CD4-positive, alpha-beta memory T cell (primary cell): ENCODE measurements at regions of chr9 and their contacts with region 1.

Region 1: GRCh38 chr9:21709464-21710058 is 92.9 kb upstream of the MTAP start:
- DNase-seq: peak; percentile 44 to 57 (median 50)
- H3K4me3 ChIP-seq: no peak overlapping the region
- H3K4me3 Mint-ChIP-seq: no peak overlapping the region
- H3K27ac ChIP-seq: no peak overlapping the region
- H3K27ac Mint-ChIP-seq: peak overlapping the region in 1 of 7 donors; percentile 43
- H3K4me1 ChIP-seq: no peaks in the 10 kb centered on the region
- H3K4me1 Mint-ChIP-seq: peaks cover 0 to 8% (median 5%) of the 10 kb centered on the region in 4 donors
- H3K27me3 ChIP-seq: peaks cover 4% of the 10 kb centered on the region
- H3K27me3 Mint-ChIP-seq: peaks cover 1 to 3% of the 10 kb centered on the region in 2 donors

Region 2: DNA sequence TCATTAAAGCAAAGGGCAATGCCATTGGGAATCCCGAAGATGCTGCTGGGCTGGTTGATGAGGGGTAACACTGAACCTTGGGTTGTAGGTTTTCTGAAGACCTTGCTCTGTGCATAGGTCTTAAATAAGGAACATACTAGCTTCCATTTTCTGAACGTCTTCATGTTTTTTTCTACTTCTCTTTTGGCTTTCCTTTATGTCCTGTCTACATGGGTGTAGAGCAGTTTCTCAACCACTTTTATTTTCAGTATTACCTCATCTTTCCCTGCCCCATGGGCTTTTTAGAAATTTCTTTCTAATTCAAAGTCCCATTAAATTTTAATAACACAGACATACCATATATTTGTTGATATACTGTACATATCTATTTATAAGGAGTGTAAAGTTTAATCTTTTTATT is 469.6 kb before region 1 on chr9 and contains the start of gene IFNA14:
- CTCF ChIA-PET with region 1: interaction called, 4 read pairs
- POLR2A ChIA-PET with region 1: no interaction called
- intact Hi-C with region 1: loop called (anchors 10 kb)
- DNase-seq: no peak
- H3K4me3 ChIP-seq: no peak within 1 kb of the TSS
- H3K4me3 Mint-ChIP-seq: no peak within 1 kb of the TSS
- H3K27ac ChIP-seq: no peak within 1 kb of the TSS
- H3K27ac Mint-ChIP-seq: no peak within 1 kb of the TSS
- H3K4me1 ChIP-seq: peaks cover 5% of the 10 kb centered on the region
- H3K4me1 Mint-ChIP-seq: peaks cover 4 to 12% (median 7%) of the 10 kb centered on the region in 4 donors
- H3K27me3 ChIP-seq: no peaks in the 10 kb centered on the region
- H3K27me3 Mint-ChIP-seq: peaks cover 2 to 15% of the 10 kb centered on the region in 2 donors
- total RNA-seq, gene IFNA14: not detected

Region 3: GRCh38 chr9:21434202-21435014 is 275.2 kb before region 1 on chr9:
- CTCF ChIA-PET with region 1: interaction called, 10 read pairs
- POLR2A ChIA-PET with region 1: no interaction called
- intact Hi-C with region 1: no loop called
- DNase-seq: peak; percentile 31 to 55 (median 40)
- H3K4me3 ChIP-seq: no peak overlapping the region
- H3K4me3 Mint-ChIP-seq: no peak overlapping the region
- H3K27ac ChIP-seq: no peak overlapping the region
- H3K27ac Mint-ChIP-seq: no peak overlapping the region
- H3K4me1 ChIP-seq: no peaks in the 10 kb centered on the region
- H3K4me1 Mint-ChIP-seq: no peaks in the 10 kb centered on the region
- H3K27me3 ChIP-seq: no peaks in the 10 kb centered on the region
- H3K27me3 Mint-ChIP-seq: peaks cover 14 to 19% of the 10 kb centered on the region in 2 donors

Region 4: DNA sequence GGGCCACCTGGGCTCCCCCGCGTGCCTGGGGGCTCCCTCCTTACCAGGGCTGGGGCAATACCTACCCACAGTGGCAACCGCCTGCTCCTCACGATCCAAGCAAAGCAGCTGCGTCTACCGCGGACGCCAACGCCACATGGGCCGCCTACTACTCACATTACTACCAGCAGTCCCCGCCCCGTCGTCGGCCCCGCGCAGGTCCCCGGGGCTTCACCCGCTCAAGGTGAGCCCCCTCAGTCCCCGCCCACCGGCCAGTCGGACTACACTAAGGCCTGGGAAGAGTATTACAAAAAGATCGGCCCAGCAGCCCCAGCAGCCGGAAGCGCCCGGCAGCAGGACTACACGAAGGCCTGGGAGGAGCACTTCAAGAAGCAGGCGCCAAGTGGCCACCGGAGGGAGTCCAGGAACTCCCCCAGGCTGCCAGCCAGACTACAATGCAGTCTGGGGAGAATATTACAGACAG is 13.1 kb before region 1 on chr9:
- CTCF ChIA-PET with region 1: interaction called, 12 read pairs
- POLR2A ChIA-PET with region 1: no interaction called
- intact Hi-C with region 1: no loop called
- DNase-seq: no peak
- H3K4me3 ChIP-seq: no peak overlapping the region
- H3K4me3 Mint-ChIP-seq: no peak overlapping the region
- H3K27ac ChIP-seq: no peak overlapping the region
- H3K27ac Mint-ChIP-seq: no peak overlapping the region
- H3K4me1 ChIP-seq: no peaks in the 10 kb centered on the region
- H3K4me1 Mint-ChIP-seq: no peaks in the 10 kb centered on the region
- H3K27me3 ChIP-seq: no peaks in the 10 kb centered on the region
- H3K27me3 Mint-ChIP-seq: peaks cover 5 to 8% of the 10 kb centered on the region in 2 donors

Region 5: GRCh38 chr9:21770877-21771560 is 61.5 kb after region 1 on chr9:
- CTCF ChIA-PET with region 1: interaction called, 12 read pairs
- POLR2A ChIA-PET with region 1: no interaction called
- intact Hi-C with region 1: no loop called
- DNase-seq: no peak
- H3K4me3 ChIP-seq: no peak overlapping the region
- H3K4me3 Mint-ChIP-seq: peak overlapping the region in 4 of 8 donors; percentile 9 to 32 (median 19)
- H3K27ac ChIP-seq: no peak overlapping the region
- H3K27ac Mint-ChIP-seq: peak overlapping the region in 5 of 7 donors; percentile 18 to 57 (median 35)
- H3K4me1 ChIP-seq: peaks cover 2% of the 10 kb centered on the region
- H3K4me1 Mint-ChIP-seq: peaks cover 8 to 15% (median 12%) of the 10 kb centered on the region in 4 donors
- H3K27me3 ChIP-seq: no peaks in the 10 kb centered on the region
- H3K27me3 Mint-ChIP-seq: peaks cover 3 to 10% of the 10 kb centered on the region in 2 donors

Region 6: DNA sequence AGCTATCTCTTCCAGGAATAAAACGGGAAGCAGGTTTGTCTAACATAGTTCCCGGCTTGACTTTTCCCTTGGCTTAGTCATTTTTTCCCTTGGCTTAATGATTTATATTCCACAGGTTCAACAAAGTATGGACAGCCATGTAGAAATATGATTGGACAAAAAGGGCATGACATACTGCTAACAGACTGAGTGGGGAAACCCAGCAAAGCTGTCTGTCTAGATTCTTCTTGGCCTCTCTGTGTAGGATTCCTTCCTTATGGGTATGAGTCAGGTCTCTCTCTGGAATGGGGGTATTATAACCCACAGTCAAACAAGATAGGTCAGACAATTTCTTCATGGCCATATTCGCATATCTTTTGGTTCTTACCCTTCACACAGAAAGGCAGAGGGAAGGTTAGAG is 87.2 kb after region 1 on chr9:
- CTCF ChIA-PET with region 1: interaction called, 14 read pairs
- POLR2A ChIA-PET with region 1: no interaction called
- intact Hi-C with region 1: no loop called
- DNase-seq: no peak
- H3K4me3 ChIP-seq: no peak overlapping the region
- H3K4me3 Mint-ChIP-seq: no peak overlapping the region
- H3K27ac ChIP-seq: no peak overlapping the region
- H3K27ac Mint-ChIP-seq: no peak overlapping the region
- H3K4me1 ChIP-seq: peaks cover 8% of the 10 kb centered on the region
- H3K4me1 Mint-ChIP-seq: peaks cover 4 to 7% (median 7%) of the 10 kb centered on the region in 4 donors
- H3K27me3 ChIP-seq: peaks cover 6% of the 10 kb centered on the region
- H3K27me3 Mint-ChIP-seq: peaks cover 10 to 13% of the 10 kb centered on the region in 2 donors